Activated CD8-positive, alpha-beta T cell treated with anti-CD3 and anti-CD28 coated beads, Interleukin-2, amount 10 ng/mL, durations not matched to agents 7 days and 5 days (primary cell): ENCODE measurements at regions of chr13 and their contacts with region 1.

Region 1: DNA sequence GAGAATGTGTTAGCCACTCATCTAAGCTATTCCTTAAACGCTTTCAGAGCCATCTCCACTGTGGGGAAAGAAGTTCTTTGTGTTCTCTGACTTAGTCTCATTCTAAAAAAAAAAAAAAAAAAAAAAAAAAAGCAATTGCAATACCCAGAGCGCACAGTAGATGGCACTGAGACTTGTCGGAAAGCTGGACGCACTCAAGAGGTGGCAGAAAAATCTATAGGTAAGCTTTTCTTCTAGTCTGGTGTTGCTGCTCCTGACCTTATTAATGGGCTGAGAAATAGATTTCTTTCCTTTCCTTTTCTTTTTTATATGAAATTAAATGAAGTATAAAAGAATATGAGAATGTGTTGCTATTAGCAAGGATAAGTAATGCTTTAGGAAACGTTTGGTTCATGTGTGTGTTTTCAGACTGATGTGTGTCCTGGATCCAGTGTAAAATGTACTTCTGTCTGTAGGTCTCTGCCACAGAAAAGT is 4.7 kb upstream of the GJB2 start:
- DNase-seq: peak; percentile 38
- ATAC-seq: peak; percentile 47
- H3K4me3 Mint-ChIP-seq: no peak overlapping the region
- H3K27ac Mint-ChIP-seq: no peak overlapping the region
- H3K4me1 Mint-ChIP-seq: peaks cover 17% of the 10 kb centered on the region
- H3K27me3 Mint-ChIP-seq: peaks cover 41% of the 10 kb centered on the region

Region 2: DNA sequence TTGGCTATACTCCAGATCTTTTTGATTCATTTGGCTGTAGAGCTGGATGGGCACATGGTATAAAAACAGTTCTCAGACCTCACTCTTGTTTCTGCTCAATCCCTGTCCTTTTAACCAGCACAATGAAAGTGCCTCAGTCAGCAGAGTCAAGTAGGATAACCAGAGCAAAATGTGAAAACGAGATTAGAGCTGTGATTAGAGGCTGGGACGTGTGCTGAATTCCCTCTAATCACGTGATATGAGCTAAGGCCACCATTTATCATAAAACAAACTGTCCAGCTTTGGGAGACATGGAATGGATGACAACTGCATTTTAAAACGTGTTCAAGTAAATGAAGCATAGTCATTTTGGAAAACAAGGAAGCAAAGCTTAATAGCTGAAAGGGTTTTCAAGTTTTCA is 90.7 kb before region 1 on chr13:
- CTCF ChIA-PET with region 1: no interaction called
- POLR2A ChIA-PET with region 1: no interaction called
- DNase-seq: no peak
- ATAC-seq: no peak
- H3K4me3 Mint-ChIP-seq: no peak overlapping the region
- H3K27ac Mint-ChIP-seq: no peak overlapping the region
- H3K4me1 Mint-ChIP-seq: no peaks in the 10 kb centered on the region
- H3K27me3 Mint-ChIP-seq: peaks cover 41% of the 10 kb centered on the region

Region 3: GRCh38 chr13:20182231-20182846 is 15.1 kb before region 1 on chr13:
- CTCF ChIA-PET with region 1: interaction called, 14 read pairs
- POLR2A ChIA-PET with region 1: no interaction called
- DNase-seq: peak; percentile 64
- ATAC-seq: peak; percentile 95
- H3K4me3 Mint-ChIP-seq: no peak overlapping the region
- H3K27ac Mint-ChIP-seq: no peak overlapping the region
- H3K4me1 Mint-ChIP-seq: no peaks in the 10 kb centered on the region
- H3K27me3 Mint-ChIP-seq: peaks cover 28% of the 10 kb centered on the region

Region 4: GRCh38 chr13:20227730-20228129 is 30.3 kb after region 1 on chr13:
- CTCF ChIA-PET with region 1: interaction called, 14 read pairs
- POLR2A ChIA-PET with region 1: no interaction called
- DNase-seq: no peak
- ATAC-seq: no peak
- H3K4me3 Mint-ChIP-seq: no peak overlapping the region
- H3K27ac Mint-ChIP-seq: no peak overlapping the region
- H3K4me1 Mint-ChIP-seq: peaks cover 16% of the 10 kb centered on the region
- H3K27me3 Mint-ChIP-seq: peaks cover 23% of the 10 kb centered on the region